ENCODE measurements at regions of chr12 and their contacts with region 1.

Region 1: DNA sequence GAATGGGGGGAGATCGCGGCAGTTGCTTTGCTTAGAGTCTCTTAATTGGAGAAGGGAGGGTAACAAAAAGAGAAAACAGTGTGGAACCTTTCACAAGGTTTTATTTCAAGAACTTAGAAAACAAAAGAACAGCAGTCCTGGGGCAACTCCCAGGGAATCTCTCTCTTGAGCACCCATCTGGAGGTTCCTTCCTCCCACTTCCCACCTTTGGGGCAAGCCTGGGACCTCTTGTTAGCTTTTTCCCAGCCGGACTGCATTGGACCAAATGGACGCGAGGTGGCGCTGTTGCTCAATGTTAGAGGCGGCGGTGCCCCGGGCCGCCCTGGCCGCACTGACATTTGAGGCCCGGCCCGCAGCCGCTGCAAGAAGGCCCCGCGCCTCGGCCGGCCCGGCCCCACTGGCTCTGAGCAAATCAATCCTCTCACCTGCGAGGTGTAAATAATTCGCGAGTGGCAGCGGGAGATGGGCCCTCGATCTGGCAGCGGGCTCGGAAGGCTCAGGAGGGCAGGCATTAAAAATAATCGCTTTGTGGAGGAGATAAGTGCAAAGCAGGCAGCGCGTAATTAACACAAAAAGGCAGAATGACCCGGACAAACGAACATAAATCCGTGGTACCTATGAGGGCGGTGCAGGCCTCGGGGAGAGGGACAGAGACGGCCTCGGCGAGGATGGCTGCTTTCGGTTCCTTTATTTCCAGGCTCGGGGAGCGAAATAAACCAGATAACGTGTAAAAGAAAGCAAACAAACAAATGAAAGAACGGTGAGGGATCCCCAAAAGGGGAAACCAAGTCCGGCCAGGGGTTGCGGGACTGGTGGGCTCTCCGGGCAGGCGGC is 2.7 kb upstream of the HOXC8 start:
- DNase-seq: peak; percentile 92
- ATAC-seq: peak; percentile 96

Region 2: DNA sequence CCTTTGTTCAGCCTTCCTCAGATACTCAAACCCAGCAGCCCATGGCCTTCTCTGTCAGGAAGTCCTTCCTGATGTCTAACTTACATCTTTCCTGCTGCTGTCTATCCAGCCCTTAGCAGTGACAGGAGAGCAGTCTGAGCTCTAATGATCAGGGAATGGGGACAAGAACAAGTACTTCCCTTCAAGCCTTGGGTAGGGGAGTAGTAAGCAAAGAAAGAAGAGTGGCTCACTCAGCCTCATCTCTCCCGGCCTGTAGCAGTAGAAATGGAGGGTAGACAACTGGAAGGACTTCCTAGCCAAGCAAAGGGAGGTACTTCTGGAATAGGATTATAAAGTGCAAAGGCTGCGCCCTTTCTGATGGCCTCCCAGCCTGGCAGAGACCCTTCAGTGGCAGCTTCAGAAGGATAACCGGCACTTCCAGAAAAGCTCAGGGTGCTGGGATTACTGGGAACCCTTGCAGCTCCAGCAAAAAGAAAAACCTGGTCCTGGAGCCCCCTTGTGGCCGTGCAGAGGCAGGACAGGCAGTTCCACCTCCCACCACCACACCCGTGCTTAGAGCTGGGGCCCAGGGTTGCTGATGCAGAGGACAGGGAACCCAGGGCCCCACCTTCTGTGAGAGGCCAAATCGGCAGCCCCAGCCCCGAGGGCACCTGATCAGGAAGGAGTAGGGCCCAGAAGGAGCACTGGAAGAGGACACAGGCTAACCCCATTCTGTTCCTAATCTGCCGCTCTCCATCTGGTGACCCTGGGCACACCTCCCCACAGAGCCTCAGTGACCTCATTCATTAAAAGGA is 195.1 kb after region 1 on chr12:
- intact Hi-C with region 1: loop called (anchors 5 kb)
- DNase-seq: peak; percentile 68
- ATAC-seq: peak; percentile 93

Measured in left ventricle myocardium superior (tissue), 1 donor.